ENCODE measurements at regions of chr16 and their contacts with region 1.

Region 1: DNA sequence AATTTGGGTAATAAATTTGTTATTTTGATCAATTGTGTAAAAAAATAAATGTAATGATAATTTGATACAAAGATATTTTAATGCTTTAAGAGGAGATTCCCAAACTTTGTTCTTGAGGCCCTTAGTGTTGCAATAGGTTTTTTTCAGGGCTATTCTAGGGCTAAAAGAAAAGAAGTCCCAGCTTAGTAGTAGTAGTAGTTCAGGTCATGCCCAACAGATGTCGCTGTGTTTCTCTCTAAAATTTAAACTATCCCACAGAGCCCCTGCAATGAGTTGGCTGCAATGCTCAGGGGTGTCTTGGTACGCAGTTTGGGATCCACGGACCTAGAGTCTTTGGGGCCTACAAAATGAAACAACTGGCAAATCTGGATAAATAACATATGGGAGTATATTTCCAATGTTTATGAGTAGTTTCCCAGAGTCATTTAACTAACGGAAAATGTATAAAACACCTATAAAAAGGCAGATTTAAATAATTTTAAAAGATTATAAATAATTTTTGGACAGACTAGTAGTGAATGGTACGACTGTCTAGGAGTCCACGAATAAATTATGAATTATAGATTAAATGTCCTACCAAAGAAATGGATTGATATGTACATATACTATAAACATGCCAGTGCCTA is 228.4 kb upstream of the PMFBP1 start:
- DNase-seq: no peak
- H3K4me3 ChIP-seq: no peak overlapping the region
- CTCF ChIP-seq: peak; percentile 61

Region 2: DNA sequence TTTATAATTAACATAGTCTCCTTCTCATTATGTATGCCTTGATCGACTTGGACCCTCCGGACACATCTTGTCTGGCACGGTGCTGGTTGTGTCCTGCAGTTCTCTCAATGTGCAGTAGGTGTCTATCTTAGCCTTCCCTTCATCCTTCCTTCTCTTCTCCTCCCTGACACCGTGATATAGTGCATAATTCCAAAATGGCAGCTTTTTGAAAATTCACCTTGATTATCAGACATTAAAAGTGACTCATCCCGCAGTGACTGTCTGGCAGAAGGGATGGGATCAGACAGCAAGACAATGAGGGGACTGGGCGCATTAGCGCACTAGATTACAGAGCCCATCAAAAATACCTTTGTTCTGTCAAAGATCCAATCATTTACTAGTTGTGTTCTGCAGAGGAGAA is 158.4 kb before region 1 on chr16:
- CTCF ChIA-PET with region 1: interaction called, 12 read pairs
- POLR2A ChIA-PET with region 1: no interaction called
- DNase-seq: no peak
- H3K4me3 ChIP-seq: no peak overlapping the region
- CTCF ChIP-seq: peak; percentile 83

Region 3: GRCh38 chr16:72384651-72385050 is 15.7 kb before region 1 on chr16:
- CTCF ChIA-PET with region 1: interaction called, 36 read pairs
- POLR2A ChIA-PET with region 1: no interaction called
- DNase-seq: no peak
- H3K4me3 ChIP-seq: no peak overlapping the region
- CTCF ChIP-seq: no peak

Region 4: GRCh38 chr16:72419638-72420037 is 19.3 kb after region 1 on chr16:
- CTCF ChIA-PET with region 1: interaction called, 20 read pairs
- POLR2A ChIA-PET with region 1: no interaction called
- DNase-seq: no peak
- H3K4me3 ChIP-seq: no peak overlapping the region
- CTCF ChIP-seq: no peak

Region 5: DNA sequence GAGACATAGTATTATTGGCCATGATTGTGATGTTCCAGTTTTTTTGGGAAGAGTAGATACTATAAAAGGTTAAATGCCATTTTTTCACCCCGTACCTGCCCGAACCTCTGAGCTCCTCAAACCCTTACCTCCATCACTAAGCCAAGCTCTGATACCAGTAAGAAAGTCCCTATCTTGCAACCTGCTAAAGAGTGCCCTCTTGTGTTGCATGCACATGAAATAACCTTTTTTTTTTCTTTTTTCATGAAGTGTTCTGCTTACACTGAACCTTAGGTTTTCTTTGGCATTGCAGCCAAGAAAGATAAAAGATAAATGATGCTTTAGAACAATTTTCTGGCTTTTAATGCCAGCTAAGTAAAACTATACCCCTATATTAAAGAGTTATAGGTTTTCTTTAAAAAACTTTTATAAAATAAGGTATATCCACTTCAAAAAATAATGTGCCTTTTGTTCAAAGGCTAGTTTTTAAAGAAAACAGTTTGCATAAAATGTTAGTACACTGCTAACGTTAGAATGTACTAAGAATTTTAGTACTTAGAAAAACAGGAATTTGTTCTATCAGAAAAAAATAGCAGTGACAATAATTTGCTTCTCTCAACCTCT is 66.9 kb after region 1 on chr16:
- CTCF ChIA-PET with region 1: interaction called, 10 read pairs
- POLR2A ChIA-PET with region 1: no interaction called
- DNase-seq: peak; percentile 10
- H3K4me3 ChIP-seq: no peak overlapping the region
- CTCF ChIP-seq: peak; percentile 56

Region 6: DNA sequence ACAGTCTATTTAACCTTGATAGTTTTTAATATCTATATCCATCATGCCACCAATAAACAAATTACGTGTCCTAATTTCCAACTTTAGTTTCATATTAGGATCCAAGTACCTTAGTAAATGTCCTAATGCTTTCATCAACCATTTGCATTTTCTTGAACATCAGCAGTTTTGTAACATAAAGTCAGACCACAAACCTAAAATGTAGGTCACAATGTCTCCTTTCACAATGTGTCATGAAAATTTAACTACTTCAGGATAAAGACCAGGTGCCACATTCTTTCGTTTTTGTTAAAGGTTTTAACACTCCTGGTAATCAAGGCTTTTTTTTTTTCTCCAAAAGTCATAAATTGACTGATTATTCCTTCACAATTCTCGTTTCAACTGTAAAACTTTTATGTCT is 82.3 kb after region 1 on chr16:
- CTCF ChIA-PET with region 1: no interaction called
- POLR2A ChIA-PET with region 1: no interaction called
- DNase-seq: no peak
- H3K4me3 ChIP-seq: no peak overlapping the region
- CTCF ChIP-seq: no peak